Esophagus squamous epithelium (tissue), 5 donors: ENCODE measurements at regions of chr13 and their contacts with region 1.

Region 1: GRCh38 chr13:95191821-95192563 is 109.3 kb downstream of the ABCC4 start:
- DNase-seq: no peak
- H3K4me3 ChIP-seq: no peak overlapping the region
- H3K27ac ChIP-seq: no peak overlapping the region
- H3K4me1 ChIP-seq: no peaks in the 10 kb centered on the region
- H3K27me3 ChIP-seq: no peaks in the 10 kb centered on the region
- CTCF ChIP-seq: peak; percentile 60 to 84 (median 82)
- POLR2A ChIP-seq: no peak

Region 2: DNA sequence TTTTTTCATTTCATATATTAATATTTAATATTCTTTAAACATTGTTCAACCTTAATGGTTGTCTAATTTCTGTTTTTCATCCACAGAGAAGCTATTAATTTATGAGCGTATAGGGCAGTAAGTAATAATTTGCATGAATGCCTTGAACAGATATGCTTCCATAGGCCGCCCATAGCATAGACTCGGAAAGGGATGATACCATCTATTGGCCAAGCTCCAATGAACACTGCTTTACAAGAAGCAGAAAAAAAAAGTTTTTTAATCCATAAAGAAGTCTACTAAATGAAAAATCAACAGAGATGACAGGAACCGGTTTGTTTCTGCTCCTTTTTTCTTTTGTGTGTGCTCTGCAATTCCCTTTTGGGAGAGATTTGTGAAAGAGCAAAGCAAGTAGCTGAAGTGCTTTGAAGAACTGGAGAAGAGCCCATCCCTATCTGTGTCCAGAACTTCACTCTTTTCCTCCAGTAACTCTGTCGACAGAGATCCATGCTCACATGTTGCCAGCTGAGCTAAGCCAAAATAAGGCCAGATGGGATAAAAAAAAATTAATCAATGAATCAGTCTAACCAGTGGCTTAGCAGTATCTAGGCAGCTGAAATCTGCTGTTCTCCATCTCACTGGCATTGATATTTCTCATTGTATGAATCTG is 263.7 kb before region 1 on chr13:
- intact Hi-C with region 1: no loop called
- DNase-seq: no peak
- H3K4me3 ChIP-seq: no peak overlapping the region
- H3K27ac ChIP-seq: no peak overlapping the region
- H3K4me1 ChIP-seq: no peaks in the 10 kb centered on the region
- H3K27me3 ChIP-seq: no peaks in the 10 kb centered on the region
- CTCF ChIP-seq: no peak
- POLR2A ChIP-seq: no peak

Region 3: DNA sequence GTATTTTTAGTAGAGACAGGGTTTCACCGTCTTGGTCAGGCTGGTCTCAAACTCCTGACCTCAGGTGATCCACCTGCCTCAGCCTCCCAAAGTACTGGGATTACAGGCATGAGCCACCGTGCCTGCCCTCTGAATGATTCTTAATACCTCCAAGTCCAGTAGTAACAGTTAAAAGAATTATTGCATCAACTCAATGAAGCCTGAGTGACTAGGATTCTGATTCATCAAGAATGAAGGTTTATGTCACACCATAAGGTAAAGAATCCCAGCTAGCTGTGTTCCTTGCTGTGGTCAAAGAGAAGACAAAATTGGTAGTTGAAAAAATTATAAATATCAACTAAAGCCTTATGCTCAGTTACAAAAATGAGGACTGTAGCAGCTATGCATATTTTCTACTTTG is 190.4 kb after region 1 on chr13:
- intact Hi-C with region 1: loop called (anchors 5 kb)
- DNase-seq: no peak
- H3K4me3 ChIP-seq: no peak overlapping the region
- H3K27ac ChIP-seq: no peak overlapping the region
- H3K4me1 ChIP-seq: peaks cover 4 to 16% (median 7%) of the 10 kb centered on the region in 3 donors
- H3K27me3 ChIP-seq: no peaks in the 10 kb centered on the region
- CTCF ChIP-seq: no peak
- POLR2A ChIP-seq: no peak

Region 4: GRCh38 chr13:95403828-95404522 is 212.0 kb after region 1 on chr13:
- intact Hi-C with region 1: loop called (anchors 5 kb)
- DNase-seq: peak; percentile 4
- H3K4me3 ChIP-seq: peak overlapping the region; percentile 9 to 58 (median 35)
- H3K27ac ChIP-seq: no peak overlapping the region
- H3K4me1 ChIP-seq: peaks cover 0 to 14% (median 4%) of the 10 kb centered on the region in 3 donors
- H3K27me3 ChIP-seq: peaks cover 0 to 9% (median 0%) of the 10 kb centered on the region in 4 donors
- CTCF ChIP-seq: peak; percentile 86 to 95 (median 92)
- POLR2A ChIP-seq: no peak

Region 5: GRCh38 chr13:95494082-95494681 is 302.2 kb after region 1 on chr13:
- intact Hi-C with region 1: no loop called
- DNase-seq: no peak
- H3K4me3 ChIP-seq: no peak overlapping the region
- H3K27ac ChIP-seq: no peak overlapping the region
- H3K4me1 ChIP-seq: peaks cover 4 to 45% (median 5%) of the 10 kb centered on the region in 3 donors
- H3K27me3 ChIP-seq: no peaks in the 10 kb centered on the region
- CTCF ChIP-seq: peak; percentile 43 to 83 (median 70)
- POLR2A ChIP-seq: no peak

Region 6: GRCh38 chr13:95588721-95589120 is 396.7 kb after region 1 on chr13:
- intact Hi-C with region 1: no loop called
- DNase-seq: no peak
- H3K4me3 ChIP-seq: no peak overlapping the region
- H3K27ac ChIP-seq: no peak overlapping the region
- H3K4me1 ChIP-seq: no peaks in the 10 kb centered on the region
- H3K27me3 ChIP-seq: no peaks in the 10 kb centered on the region
- CTCF ChIP-seq: no peak
- POLR2A ChIP-seq: no peak